B cell (primary cell): ENCODE measurements at regions of chr1 and their contacts with region 1.

Region 1: GRCh38 chr1:167721617-167722151 is at the start of gene MPZL1:
- DNase-seq: peak; percentile 96
- ATAC-seq: peak; percentile 97
- H3K4me3 ChIP-seq: peak within 1 kb of the TSS; percentile 64 to 93 (median 76)
- H3K4me3 Mint-ChIP-seq: peak within 1 kb of the TSS; percentile 87
- H3K27ac ChIP-seq: peak within 1 kb of the TSS; percentile 49 to 66
- H3K27ac Mint-ChIP-seq: peak within 1 kb of the TSS; percentile 86
- H3K4me1 ChIP-seq: peaks cover 46 to 59% of the 10 kb centered on the region in 2 donors
- H3K4me1 Mint-ChIP-seq: peaks cover 70% of the 10 kb centered on the region
- H3K27me3 ChIP-seq: no peaks in the 10 kb centered on the region
- H3K27me3 Mint-ChIP-seq: no peaks in the 10 kb centered on the region
- CTCF ChIP-seq: no peak
- total RNA-seq, gene MPZL1: 27.7 and 27.9 TPM in 2 replicates

Region 2: DNA sequence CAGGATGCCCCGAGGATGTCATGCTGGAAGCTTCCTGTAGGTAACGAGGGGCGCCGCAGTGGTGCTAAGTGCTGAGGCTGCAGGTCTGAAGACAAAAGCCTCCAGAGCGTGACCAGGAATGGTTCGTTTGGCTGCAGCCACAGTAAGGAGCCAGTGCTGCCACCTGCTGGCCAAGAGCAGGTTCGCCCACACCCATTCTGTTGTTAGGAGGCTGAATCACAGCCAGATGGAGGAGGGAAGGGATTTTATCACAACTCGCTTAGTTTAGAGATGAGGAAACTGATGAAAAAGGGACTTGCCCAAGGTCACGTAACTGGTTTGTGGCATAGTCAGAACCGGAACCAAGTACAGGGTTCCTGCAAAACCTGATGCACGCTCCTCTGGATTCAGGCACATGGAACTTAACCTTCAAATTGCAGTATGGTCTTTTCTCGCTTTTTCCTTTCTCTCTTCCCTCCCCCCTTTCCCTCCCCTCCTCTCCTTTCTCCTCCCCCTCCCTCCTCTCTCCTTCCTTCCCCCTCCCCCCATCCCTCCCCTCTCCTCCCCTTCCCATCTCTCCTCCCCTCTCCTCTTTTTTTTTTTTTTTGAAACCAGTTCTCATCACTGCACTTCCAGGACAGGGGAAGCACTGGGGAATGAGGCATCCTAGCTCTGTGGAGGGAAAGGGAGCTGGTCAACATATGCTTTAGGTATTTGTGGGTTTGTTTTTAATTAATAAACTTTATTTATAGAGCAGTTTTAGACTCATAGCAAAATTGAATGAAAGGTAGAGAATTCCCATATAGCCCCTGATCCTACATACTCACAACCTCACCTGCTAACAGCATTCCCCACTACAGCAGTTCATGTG is 81.9 kb after region 1 on chr1:
- CTCF ChIA-PET with region 1: interaction called, 4 read pairs
- POLR2A ChIA-PET with region 1: interaction called, 9 read pairs
- intact Hi-C with region 1: loop called (anchors 1 kb)
- DNase-seq: peak; percentile 92
- ATAC-seq: peak; percentile 98
- H3K4me3 ChIP-seq: no peak overlapping the region
- H3K4me3 Mint-ChIP-seq: peak overlapping the region; percentile 18
- H3K27ac ChIP-seq: no peak overlapping the region
- H3K27ac Mint-ChIP-seq: peak overlapping the region; percentile 6
- H3K4me1 ChIP-seq: peaks cover 13 to 16% of the 10 kb centered on the region in 2 donors
- H3K4me1 Mint-ChIP-seq: peaks cover 23% of the 10 kb centered on the region
- H3K27me3 ChIP-seq: no peaks in the 10 kb centered on the region
- H3K27me3 Mint-ChIP-seq: no peaks in the 10 kb centered on the region
- CTCF ChIP-seq: peak; percentile 93